Breast epithelium (tissue), 4 donors: ENCODE measurements at regions of chr5 and their contacts with region 1.

Region 1: DNA sequence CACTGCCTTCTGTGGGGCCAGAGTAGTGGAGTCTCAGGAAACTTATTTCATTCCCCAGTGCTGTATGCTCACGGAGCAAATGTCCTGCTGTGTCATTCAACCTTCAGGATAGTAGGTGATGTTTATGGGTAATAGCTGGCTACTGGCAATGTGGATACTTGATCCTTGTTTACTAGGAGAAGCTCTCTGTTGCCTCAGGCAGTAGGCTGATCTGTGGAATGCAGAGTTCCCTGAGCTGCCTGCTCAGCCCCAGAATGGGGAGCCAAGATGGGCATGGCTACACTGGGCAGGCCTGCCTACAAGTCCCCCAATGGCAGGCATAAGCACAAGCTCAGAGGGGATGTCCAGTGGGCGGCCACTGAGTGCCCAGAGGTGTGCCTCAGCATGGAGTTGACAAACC is 323.1 kb upstream of the KCNN2 start:
- DNase-seq: no peak
- H3K4me3 ChIP-seq: no peak overlapping the region
- H3K27ac ChIP-seq: no peak overlapping the region
- H3K4me1 ChIP-seq: no peaks in the 10 kb centered on the region
- H3K27me3 ChIP-seq: peaks cover 0 to 3% of the 10 kb centered on the region in 2 donors
- CTCF ChIP-seq: no peak
- POLR2A ChIP-seq: no peak

Region 2: DNA sequence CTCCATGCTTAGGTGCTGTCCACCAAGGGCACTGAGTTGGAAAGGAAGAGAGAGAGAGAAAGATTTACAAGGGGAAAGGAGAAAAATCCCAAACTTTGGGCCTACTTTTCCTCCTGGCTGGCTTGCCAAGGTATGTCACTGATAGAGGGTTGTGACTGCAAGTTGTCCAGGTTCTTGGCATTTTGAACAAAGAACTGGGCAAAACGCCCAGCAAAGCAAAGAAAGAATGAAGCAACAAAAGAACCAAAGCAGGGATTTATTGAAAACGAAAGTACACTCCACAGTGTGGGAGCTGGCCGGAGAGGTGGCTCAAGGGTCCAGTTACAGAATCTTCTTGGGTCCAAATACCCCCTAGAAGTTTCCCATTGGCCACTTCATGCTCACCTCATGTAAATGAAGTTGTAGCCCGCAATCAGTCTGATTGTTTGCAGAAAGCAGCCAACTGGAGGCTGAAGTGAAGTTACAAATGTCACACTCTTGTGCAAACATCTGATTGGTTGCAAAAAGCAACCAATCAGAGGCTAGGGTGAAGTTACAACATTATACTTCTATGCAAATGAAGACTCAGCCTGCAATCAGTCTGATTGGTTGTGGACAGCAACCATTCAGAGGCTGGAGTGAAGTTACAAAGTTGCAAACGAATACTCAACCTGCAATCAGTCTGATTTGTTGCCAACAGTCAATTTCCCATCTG is 261.8 kb before region 1 on chr5:
- intact Hi-C with region 1: no loop called
- DNase-seq: no peak
- H3K4me3 ChIP-seq: peak overlapping the region in 1 of 3 donors; percentile 11
- H3K27ac ChIP-seq: no peak overlapping the region
- H3K4me1 ChIP-seq: no peaks in the 10 kb centered on the region
- H3K27me3 ChIP-seq: no peaks in the 10 kb centered on the region
- CTCF ChIP-seq: no peak
- POLR2A ChIP-seq: no peak

Region 3: GRCh38 chr5:113875096-113875495 is 163.7 kb before region 1 on chr5:
- intact Hi-C with region 1: no loop called
- DNase-seq: no peak
- H3K4me3 ChIP-seq: no peak overlapping the region
- H3K27ac ChIP-seq: no peak overlapping the region
- H3K4me1 ChIP-seq: no peaks in the 10 kb centered on the region
- H3K27me3 ChIP-seq: peaks cover 0 to 3% of the 10 kb centered on the region in 2 donors
- CTCF ChIP-seq: no peak
- POLR2A ChIP-seq: no peak

Region 4: GRCh38 chr5:114237766-114238165 is 199.0 kb after region 1 on chr5:
- intact Hi-C with region 1: loop called (anchors 5 kb)
- DNase-seq: no peak
- H3K4me3 ChIP-seq: no peak overlapping the region
- H3K27ac ChIP-seq: no peak overlapping the region
- H3K4me1 ChIP-seq: no peaks in the 10 kb centered on the region
- H3K27me3 ChIP-seq: no peaks in the 10 kb centered on the region
- CTCF ChIP-seq: no peak
- POLR2A ChIP-seq: no peak